Calu3 (cell line): ENCODE measurements at regions of chr9 and their contacts with region 1.

Region 1: DNA sequence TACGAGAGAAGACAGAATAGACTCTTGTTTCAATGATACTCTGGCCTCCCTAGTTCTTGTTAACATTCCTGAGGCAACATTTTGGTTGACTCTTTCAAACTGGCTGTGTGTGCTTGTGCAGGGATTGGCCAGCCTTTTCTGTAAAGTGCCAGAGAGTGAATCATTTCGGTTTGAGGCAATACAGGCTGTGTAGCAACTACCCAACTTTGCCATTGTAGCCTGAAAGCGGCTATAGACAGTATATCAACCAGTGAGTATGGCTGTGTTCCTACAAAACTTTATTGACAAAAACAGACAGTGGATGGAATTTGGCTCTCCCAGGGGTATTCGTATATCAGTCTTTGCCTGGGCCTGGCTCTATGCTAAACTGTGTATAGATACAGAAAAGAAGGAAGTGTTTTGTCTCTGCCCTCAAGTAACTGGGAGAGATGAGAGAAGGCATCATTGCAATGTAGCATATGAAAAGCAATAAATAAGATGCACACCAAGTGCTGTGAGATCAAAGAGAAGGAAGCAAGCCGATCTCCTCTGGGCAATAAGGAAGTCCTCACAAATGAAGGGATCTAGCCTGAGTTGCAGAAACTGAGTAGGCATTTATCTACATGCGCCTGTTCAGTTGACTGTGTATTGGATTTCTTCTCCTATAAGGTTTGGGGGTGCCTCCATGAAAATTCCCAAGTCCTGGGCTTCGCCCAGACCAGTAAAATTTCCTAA is 568.0 kb upstream of the KLF4 start:
- DNase-seq: peak; percentile 8
- H3K4me3 Mint-ChIP-seq: no peak overlapping the region
- H3K27ac Mint-ChIP-seq: no peak overlapping the region
- H3K4me1 Mint-ChIP-seq: peaks cover 32% of the 10 kb centered on the region
- H3K27me3 Mint-ChIP-seq: no peaks in the 10 kb centered on the region
- CTCF ChIP-seq: no peak

Region 2: GRCh38 chr9:107484117-107484723 is 573.4 kb before region 1 on chr9:
- CTCF ChIA-PET with region 1: no interaction called
- intact Hi-C with region 1: loop called (anchors 5 kb)
- DNase-seq: peak; percentile 34
- H3K4me3 Mint-ChIP-seq: no peak overlapping the region
- H3K27ac Mint-ChIP-seq: no peak overlapping the region
- H3K4me1 Mint-ChIP-seq: peaks cover 7% of the 10 kb centered on the region
- H3K27me3 Mint-ChIP-seq: no peaks in the 10 kb centered on the region
- CTCF ChIP-seq: peak; percentile 19

Region 3: DNA sequence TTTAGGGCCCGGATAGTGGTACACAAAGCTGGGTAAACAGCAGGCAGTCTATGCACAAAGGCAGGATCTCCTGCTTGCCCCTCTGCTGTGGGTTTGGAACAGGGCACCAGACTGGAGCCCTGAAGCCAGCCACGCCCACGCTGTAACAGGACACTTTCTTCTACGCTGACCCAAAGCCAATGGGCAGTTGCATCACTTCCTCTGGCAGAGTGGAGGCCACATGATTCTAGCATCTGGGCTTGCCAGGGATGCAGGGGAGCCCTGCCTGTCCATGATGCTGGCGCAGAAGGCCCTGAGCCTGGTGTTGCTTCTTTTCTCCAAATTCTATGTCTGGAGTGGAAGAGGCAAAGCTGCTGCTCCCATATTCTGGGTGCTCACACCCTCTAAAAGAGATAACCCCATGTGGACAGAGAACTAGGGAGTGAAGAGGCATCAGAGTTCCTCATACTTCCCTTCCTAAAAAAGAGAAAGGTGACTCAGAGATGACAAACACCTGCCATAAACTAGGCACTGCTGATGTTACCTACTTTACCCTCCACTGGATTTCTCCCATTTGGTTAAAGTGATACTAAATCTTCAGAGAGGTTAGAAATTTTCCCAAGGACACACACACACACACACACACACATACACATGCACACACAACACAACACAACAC is 307.7 kb before region 1 on chr9:
- CTCF ChIA-PET with region 1: no interaction called
- intact Hi-C with region 1: loop called (anchors 5 kb)
- DNase-seq: peak; percentile 75
- H3K4me3 Mint-ChIP-seq: no peak overlapping the region
- H3K27ac Mint-ChIP-seq: peak overlapping the region; percentile 97
- H3K4me1 Mint-ChIP-seq: peaks cover 54% of the 10 kb centered on the region
- H3K27me3 Mint-ChIP-seq: no peaks in the 10 kb centered on the region
- CTCF ChIP-seq: no peak

Region 4: GRCh38 chr9:108002371-108002956 is 55.1 kb before region 1 on chr9:
- CTCF ChIA-PET with region 1: no interaction called
- intact Hi-C with region 1: no loop called
- DNase-seq: no peak
- H3K4me3 Mint-ChIP-seq: no peak overlapping the region
- H3K27ac Mint-ChIP-seq: no peak overlapping the region
- H3K4me1 Mint-ChIP-seq: no peaks in the 10 kb centered on the region
- H3K27me3 Mint-ChIP-seq: no peaks in the 10 kb centered on the region
- CTCF ChIP-seq: no peak

Region 5: DNA sequence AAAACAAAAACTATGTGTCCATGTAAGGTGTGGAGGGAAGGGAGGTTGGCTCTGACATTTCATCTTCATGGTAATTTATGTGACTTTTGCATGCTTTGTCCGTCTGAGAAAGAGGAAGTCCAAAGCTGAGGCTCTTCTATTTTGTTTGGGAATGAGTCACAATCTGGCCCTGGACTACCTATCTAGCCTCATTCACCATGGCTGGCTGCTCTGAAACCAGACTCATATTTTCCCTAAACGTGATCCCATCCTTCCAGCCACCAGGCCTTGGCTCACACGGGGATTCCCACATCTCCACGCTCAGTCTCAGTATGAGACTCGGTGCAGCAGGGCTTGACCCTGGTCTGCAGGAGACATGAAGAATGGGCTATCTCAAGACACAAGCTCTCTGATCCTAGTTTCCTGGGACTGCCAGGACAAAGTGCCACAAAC is 125.4 kb after region 1 on chr9:
- CTCF ChIA-PET with region 1: no interaction called
- intact Hi-C with region 1: no loop called
- DNase-seq: no peak
- H3K4me3 Mint-ChIP-seq: no peak overlapping the region
- H3K27ac Mint-ChIP-seq: no peak overlapping the region
- H3K4me1 Mint-ChIP-seq: no peaks in the 10 kb centered on the region
- H3K27me3 Mint-ChIP-seq: no peaks in the 10 kb centered on the region
- CTCF ChIP-seq: no peak

Region 6: GRCh38 chr9:108272349-108272899 is 214.8 kb after region 1 on chr9:
- CTCF ChIA-PET with region 1: interaction called, 7 read pairs
- intact Hi-C with region 1: loop called (anchors 5 kb)
- DNase-seq: peak; percentile 66
- H3K4me3 Mint-ChIP-seq: peak overlapping the region; percentile 70
- H3K27ac Mint-ChIP-seq: peak overlapping the region; percentile 90
- H3K4me1 Mint-ChIP-seq: peaks cover 36% of the 10 kb centered on the region
- H3K27me3 Mint-ChIP-seq: no peaks in the 10 kb centered on the region
- CTCF ChIP-seq: peak; percentile 49